ENCODE measurements at regions of chr7 and their contacts with region 1.

Region 1: GRCh38 chr7:604001-604883 is 84.6 kb upstream of the PDGFA start:
- DNase-seq: peak; percentile 81
- ATAC-seq: peak; percentile 71
- H3K4me3 Mint-ChIP-seq: peak overlapping the region; percentile 83
- H3K27ac Mint-ChIP-seq: peak overlapping the region; percentile 98
- H3K4me1 Mint-ChIP-seq: peaks cover 63% of the 10 kb centered on the region
- H3K27me3 Mint-ChIP-seq: no peaks in the 10 kb centered on the region
- CTCF ChIP-seq: no peak

Region 2: GRCh38 chr7:341841-342638 is 262.2 kb before region 1 on chr7:
- CTCF ChIA-PET with region 1: no interaction called
- POLR2A ChIA-PET with region 1: no interaction called
- intact Hi-C with region 1: no loop called
- DNase-seq: no peak
- ATAC-seq: no peak
- H3K4me3 Mint-ChIP-seq: no peak overlapping the region
- H3K27ac Mint-ChIP-seq: no peak overlapping the region
- H3K4me1 Mint-ChIP-seq: no peaks in the 10 kb centered on the region
- H3K27me3 Mint-ChIP-seq: no peaks in the 10 kb centered on the region
- CTCF ChIP-seq: no peak

Region 3: GRCh38 chr7:379456-380138 is 224.6 kb before region 1 on chr7:
- CTCF ChIA-PET with region 1: no interaction called
- POLR2A ChIA-PET with region 1: no interaction called
- intact Hi-C with region 1: loop called (anchors 10 kb)
- DNase-seq: no peak
- ATAC-seq: peak; percentile 54
- H3K4me3 Mint-ChIP-seq: peak overlapping the region; percentile 72
- H3K27ac Mint-ChIP-seq: no peak overlapping the region
- H3K4me1 Mint-ChIP-seq: peaks cover 33% of the 10 kb centered on the region
- H3K27me3 Mint-ChIP-seq: peaks cover 2% of the 10 kb centered on the region
- CTCF ChIP-seq: no peak

Region 4: GRCh38 chr7:435630-436366 is 168.4 kb before region 1 on chr7:
- CTCF ChIA-PET with region 1: no interaction called
- POLR2A ChIA-PET with region 1: no interaction called
- intact Hi-C with region 1: no loop called
- DNase-seq: no peak
- ATAC-seq: no peak
- H3K4me3 Mint-ChIP-seq: no peak overlapping the region
- H3K27ac Mint-ChIP-seq: no peak overlapping the region
- H3K4me1 Mint-ChIP-seq: no peaks in the 10 kb centered on the region
- H3K27me3 Mint-ChIP-seq: peaks cover 2% of the 10 kb centered on the region
- CTCF ChIP-seq: no peak

Region 5: DNA sequence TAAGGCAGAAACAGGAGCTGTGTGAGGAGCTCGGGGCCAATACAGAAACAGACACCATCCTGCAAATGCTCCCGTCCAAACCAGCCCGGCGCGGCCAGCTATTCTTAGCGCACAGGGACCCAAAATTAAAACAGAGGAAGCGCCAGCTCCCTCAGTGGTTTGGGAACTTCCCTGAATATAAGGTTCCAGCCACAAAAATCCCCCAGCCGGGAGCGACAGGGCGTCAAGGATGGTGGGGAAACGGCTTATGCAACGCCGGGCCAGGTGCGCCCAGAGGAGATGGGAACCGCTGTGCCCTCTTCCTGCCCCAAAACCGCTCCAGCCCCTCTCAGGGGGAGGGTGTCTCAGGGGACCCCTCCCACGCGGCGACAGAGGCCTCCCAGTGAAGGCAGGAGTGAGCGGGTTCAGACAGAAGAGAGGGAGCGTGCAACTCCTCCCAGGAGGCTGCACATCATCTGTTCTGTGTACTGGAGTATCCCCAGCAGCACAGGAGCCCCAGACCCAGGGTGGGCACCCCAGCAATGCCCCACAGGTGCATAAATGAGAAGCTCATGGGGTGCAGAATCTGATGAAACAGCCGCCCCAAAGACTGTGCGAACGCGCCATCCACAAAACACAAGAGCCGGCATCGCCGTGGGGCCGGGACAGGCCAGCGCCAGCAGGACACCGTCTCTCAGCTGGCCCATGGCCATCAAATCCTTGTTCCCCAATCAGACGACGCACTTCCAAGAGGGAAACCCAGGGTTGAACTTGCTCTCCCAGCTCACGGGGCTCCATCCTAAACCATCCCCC is 10.7 kb before region 1 on chr7:
- CTCF ChIA-PET with region 1: no interaction called
- POLR2A ChIA-PET with region 1: interaction called, 6 read pairs
- intact Hi-C with region 1: loop called (anchors 1 kb)
- DNase-seq: peak; percentile 47
- ATAC-seq: peak; percentile 77
- H3K4me3 Mint-ChIP-seq: peak overlapping the region; percentile 38
- H3K27ac Mint-ChIP-seq: no peak overlapping the region
- H3K4me1 Mint-ChIP-seq: peaks cover 24% of the 10 kb centered on the region
- H3K27me3 Mint-ChIP-seq: no peaks in the 10 kb centered on the region
- CTCF ChIP-seq: no peak

Region 6: GRCh38 chr7:816300-816750 is 212.1 kb after region 1 on chr7:
- CTCF ChIA-PET with region 1: no interaction called
- POLR2A ChIA-PET with region 1: interaction called, 3 read pairs
- intact Hi-C with region 1: loop called (anchors 5 kb)
- DNase-seq: peak; percentile 94
- ATAC-seq: peak; percentile 92
- H3K4me3 Mint-ChIP-seq: peak overlapping the region; percentile 81
- H3K27ac Mint-ChIP-seq: no peak overlapping the region
- H3K4me1 Mint-ChIP-seq: peaks cover 64% of the 10 kb centered on the region
- H3K27me3 Mint-ChIP-seq: no peaks in the 10 kb centered on the region
- CTCF ChIP-seq: no peak

Region 7: GRCh38 chr7:826245-826917 is 222.1 kb after region 1 on chr7:
- CTCF ChIA-PET with region 1: no interaction called
- POLR2A ChIA-PET with region 1: no interaction called
- intact Hi-C with region 1: no loop called
- DNase-seq: no peak
- ATAC-seq: no peak
- H3K4me3 Mint-ChIP-seq: no peak overlapping the region
- H3K27ac Mint-ChIP-seq: no peak overlapping the region
- H3K4me1 Mint-ChIP-seq: peaks cover 41% of the 10 kb centered on the region
- H3K27me3 Mint-ChIP-seq: no peaks in the 10 kb centered on the region
- CTCF ChIP-seq: no peak

Region 8: DNA sequence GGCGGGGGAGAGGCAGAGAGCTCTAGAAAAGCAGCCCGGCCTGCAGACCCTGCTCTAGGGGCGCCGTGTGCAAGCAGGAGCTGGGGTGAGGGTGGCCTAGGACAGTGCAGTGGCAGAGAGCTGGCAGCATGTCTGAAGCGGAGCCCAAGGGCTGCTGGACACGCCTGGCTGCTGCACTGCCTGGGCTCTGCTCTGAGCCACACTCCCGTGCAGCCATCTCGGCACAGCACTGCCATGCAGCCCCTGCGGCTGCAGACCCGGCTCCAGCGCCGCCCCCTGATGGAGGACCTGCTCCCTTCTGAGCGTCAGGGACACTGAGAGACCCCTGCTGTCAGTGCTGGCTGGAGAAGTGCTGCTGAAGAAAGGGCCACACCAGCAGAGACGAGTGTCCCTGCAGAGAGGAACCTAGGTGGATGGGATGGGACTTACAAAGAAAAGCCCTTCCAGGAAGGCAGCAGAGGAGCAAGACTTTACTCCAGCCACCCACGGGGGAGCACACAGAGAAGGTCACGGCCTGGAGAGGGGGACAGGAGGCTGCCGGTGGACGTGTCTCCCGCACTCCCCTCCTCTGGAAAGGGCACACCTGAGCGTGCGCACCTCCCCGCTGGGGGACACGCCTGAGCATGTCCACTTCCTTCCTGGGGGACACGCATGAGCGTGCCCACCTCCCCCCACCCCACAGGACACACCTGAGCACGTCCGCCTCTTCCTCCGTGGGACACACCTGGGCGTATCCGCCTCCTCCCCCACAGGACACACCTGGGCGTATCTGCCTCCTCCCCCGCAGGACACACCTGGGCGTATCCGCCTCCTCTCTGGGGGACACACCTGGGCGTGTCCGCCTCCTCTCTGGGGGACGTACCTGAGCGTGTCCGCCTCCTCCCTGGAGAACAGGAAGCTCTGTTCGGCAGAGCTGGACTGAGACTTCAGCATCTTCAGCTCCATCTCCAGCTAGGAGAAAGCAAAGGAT is 1375.6 kb after region 1 on chr7:
- CTCF ChIA-PET with region 1: no interaction called
- POLR2A ChIA-PET with region 1: no interaction called
- intact Hi-C with region 1: no loop called
- DNase-seq: peak; percentile 48
- ATAC-seq: peak; percentile 95
- H3K4me3 Mint-ChIP-seq: peak overlapping the region; percentile 57
- H3K27ac Mint-ChIP-seq: peak overlapping the region; percentile 75
- H3K4me1 Mint-ChIP-seq: peaks cover 24% of the 10 kb centered on the region
- H3K27me3 Mint-ChIP-seq: no peaks in the 10 kb centered on the region
- CTCF ChIP-seq: no peak